Kidney (tissue), 22 donors: ENCODE measurements at regions of chr17 and their contacts with region 1.

Region 1: DNA sequence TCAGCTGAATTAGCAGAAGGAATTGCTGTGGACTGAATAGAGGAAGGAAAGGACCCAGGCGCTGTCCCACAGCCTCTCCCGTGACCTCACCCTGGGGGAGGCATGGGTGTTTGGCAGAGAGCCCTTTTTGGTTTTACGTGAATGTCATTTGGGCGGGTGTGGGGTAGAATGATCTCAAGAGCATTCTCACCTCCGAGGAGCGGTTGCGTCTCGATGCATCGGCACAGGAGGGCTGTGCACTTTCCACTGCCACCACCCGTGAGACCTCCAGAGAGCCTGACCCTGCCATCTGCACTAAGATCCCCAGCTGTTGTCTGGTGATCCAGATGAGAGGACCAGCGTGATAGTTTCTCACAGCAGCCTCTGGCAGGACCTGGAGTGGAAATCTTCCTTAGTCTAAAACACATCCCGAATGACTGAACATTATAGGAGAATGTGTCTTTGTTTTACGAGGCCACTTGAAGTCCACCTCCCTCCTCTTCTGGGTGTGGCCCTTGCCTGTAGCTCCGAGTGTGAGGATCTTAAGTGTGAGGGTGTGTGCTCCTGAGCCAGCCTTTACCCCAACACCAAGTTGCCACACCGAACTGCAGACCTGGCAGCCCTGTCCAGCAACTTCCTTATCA is 29.3 kb downstream of the FOXK2 start:
- DNase-seq: no peak
- H3K4me3 ChIP-seq: no peak overlapping the region
- H3K27ac ChIP-seq: peak overlapping the region in 1 of 2 donors; percentile 13
- H3K4me1 ChIP-seq: peaks cover 0 to 27% (median 22%) of the 10 kb centered on the region in 3 donors
- H3K27me3 ChIP-seq: no peaks in the 10 kb centered on the region
- CTCF ChIP-seq: no peak

Region 2: GRCh38 chr17:82358465-82359350 is 190.1 kb before region 1 on chr17 and contains the start of gene TEX19:
- intact Hi-C with region 1: loop called (anchors 5 kb)
- DNase-seq: no peak
- H3K4me3 ChIP-seq: no peak within 1 kb of the TSS
- H3K27ac ChIP-seq: no peak within 1 kb of the TSS
- H3K4me1 ChIP-seq: peaks cover 0 to 8% (median 0%) of the 10 kb centered on the region in 3 donors
- H3K27me3 ChIP-seq: peaks cover 3% of the 10 kb centered on the region
- CTCF ChIP-seq: no peak
- total RNA-seq, gene TEX19: not detected

Region 3: DNA sequence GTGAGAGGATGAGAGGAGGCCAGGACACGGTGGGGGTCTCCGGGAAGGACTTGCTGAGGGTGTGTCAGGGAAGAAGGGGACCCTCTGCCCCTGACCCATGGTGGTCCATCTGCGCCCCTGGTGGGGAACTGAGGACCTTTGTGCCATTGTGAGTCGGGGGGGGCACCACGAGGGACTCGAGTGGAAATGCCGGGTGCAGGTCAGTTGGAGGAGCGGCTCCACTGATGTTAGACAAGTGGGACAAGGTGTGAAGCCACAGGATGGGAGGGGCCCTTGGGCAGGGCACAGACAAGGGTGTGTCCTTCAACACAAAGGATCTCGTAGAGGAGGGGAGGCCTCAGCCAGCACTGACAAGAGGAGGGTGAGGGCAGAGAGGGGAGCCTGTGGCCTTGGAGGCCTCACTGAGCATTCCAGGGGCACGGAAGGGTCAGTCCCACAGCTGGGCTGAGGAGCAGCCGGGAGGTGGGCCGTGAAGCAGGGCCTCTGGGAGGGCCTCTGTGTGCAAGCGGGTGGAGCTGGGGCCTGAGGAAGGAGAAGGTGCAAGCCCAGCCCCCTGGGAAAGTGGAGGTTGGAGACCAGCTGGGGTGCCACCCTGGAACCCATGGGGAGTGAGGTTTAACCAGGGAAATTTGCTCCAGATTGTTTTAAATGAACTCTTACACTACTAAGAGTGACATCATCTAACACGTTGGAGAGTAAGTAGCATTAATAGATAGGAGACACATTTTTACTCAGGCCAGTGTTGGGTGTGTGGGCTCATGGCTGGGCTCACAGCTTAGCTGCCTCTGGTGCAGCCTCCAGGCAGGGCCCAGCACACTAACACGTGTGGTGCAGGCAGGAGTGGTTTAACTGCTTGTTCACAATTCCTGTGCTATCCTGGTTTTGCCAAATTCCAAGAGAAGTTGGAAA is 62.4 kb before region 1 on chr17:
- intact Hi-C with region 1: no loop called
- DNase-seq: no peak
- H3K4me3 ChIP-seq: no peak overlapping the region
- H3K27ac ChIP-seq: no peak overlapping the region
- H3K4me1 ChIP-seq: no peaks in the 10 kb centered on the region
- H3K27me3 ChIP-seq: no peaks in the 10 kb centered on the region
- CTCF ChIP-seq: no peak